Activated naive CD4-positive, alpha-beta T cell treated with anti-CD3 and anti-CD28 coated beads for 36 hours (primary cell): ENCODE measurements at regions of chrX and their contacts with region 1.

Region 1: DNA sequence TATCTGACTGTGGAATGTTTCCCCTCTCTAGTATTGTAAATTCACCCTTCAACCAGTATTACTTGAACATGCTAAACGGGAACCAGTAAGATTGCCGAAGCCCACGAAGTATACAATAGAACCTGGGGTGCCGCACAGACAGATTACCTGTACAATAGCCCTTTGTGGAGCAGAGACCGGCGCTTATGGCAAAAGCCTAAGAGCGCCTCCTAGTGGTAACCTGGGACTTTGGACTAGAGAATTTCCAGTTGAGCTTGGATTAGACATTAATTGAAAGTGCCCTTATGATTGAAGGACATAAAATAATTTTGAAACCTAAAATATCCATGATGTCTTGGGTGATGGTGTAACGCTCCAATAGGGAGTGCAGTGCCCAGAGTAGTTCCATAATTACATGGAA is 14.1 kb downstream of the ZNF157 start:
- DNase-seq: peak; percentile 79
- H3K4me3 Mint-ChIP-seq: no peak overlapping the region
- H3K27ac Mint-ChIP-seq: no peak overlapping the region
- H3K4me1 Mint-ChIP-seq: peaks cover 25% of the 10 kb centered on the region
- H3K27me3 Mint-ChIP-seq: no peaks in the 10 kb centered on the region

Region 2: DNA sequence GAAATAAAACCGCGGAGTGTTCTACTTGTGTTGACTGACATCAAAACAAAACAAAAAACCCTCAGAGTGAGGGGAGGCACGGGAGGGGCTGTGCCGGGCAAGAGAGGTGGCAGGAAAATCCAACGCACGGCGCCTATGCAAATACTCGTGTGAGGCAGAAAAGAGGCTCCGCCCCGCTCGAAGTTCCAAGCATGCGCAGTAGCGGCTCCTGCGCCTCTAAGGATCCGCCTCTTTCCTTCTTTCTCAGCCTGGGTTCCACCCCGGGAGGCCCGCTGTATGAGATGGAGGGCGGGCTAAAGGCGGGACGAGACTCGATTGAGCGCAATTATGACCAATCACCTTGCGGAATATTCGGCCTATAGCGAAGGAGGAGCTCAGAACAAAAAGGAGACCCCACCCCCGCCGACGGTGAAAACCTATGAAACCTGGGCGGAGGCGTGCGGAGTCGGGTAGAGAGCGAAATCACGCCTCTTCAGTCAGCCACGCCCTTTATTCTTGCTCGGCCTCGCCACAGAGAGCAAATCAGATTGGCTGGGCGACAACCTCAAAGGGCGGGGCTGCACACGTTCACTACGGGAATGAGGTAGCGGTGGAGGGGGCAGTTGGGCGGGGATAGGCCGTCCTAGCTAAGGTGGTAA is 166.7 kb before region 1 on chrX:
- CTCF ChIA-PET with region 1: interaction called, 3 read pairs
- intact Hi-C with region 1: loop called (anchors 5 kb)
- DNase-seq: peak; percentile 98
- H3K4me3 Mint-ChIP-seq: peak overlapping the region; percentile 80
- H3K27ac Mint-ChIP-seq: peak overlapping the region; percentile 98
- H3K4me1 Mint-ChIP-seq: peaks cover 37% of the 10 kb centered on the region
- H3K27me3 Mint-ChIP-seq: no peaks in the 10 kb centered on the region

Region 3: DNA sequence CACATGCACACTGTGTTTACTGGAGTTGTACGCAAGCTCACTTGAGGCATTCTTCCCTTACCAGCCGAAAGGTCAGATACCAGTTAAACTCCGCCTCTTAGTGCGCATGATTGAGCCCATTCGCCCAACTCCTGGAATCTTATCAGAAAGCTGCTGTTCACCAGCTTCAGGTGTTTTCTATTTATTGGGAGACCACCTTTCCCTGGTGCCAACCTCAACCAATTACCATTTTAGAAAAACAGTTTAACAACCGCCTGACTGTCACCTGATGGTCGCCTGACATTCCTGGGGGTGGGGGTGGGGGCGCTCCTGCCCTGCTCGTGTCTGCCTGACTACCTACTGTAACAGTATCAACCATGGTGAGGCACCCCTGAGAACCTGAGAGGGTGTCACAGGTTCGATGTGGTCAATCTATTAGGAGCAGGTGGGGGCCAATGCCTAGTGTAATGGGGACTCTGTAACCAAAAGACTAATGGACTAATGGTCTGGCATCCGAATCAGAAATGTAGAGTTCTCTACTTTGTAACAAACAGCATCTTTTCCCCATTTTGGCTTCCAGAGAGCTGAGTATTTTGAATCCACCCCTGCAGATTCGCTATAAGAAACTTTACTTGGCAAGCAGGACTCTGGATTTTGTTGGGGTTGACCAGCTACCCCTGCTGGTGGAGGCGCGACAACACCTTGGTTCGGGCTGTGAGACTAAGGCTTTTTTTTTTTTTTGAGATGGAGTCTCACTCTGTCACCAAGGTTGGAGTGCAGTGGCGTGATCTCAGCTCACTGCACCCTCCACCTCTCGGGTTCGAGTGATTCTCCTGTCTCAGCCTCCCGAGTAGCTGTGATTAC is 72.3 kb before region 1 on chrX:
- CTCF ChIA-PET with region 1: no interaction called
- intact Hi-C with region 1: loop called (anchors 2 kb)
- DNase-seq: peak; percentile 69
- H3K4me3 Mint-ChIP-seq: no peak overlapping the region
- H3K27ac Mint-ChIP-seq: no peak overlapping the region
- H3K4me1 Mint-ChIP-seq: peaks cover 3% of the 10 kb centered on the region
- H3K27me3 Mint-ChIP-seq: no peaks in the 10 kb centered on the region

Region 4: DNA sequence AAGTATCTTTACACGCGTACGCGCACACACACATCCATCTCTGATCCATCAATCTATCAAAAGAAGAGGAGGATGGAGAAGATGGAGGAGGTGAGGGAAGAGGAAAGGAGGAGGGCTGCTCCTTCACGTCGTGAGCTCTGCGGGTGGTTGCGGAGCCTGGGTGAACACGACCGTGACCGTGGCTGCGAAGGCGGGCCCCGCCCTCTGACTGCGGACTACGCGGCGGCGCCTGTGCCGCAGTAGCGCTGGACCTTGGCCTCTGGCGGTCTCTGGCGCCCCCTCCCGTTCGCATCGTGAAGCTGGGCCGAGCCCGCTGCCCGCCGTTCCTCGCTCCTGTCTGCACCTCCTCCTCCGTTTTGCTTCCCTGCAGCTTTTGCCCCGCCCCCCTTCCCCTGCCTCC is 138.8 kb after region 1 on chrX:
- CTCF ChIA-PET with region 1: interaction called, 4 read pairs
- intact Hi-C with region 1: loop called (anchors 5 kb)
- DNase-seq: peak; percentile 82
- H3K4me3 Mint-ChIP-seq: peak overlapping the region; percentile 62
- H3K27ac Mint-ChIP-seq: no peak overlapping the region
- H3K4me1 Mint-ChIP-seq: no peaks in the 10 kb centered on the region
- H3K27me3 Mint-ChIP-seq: no peaks in the 10 kb centered on the region